Activated CD4-positive, alpha-beta memory T cell treated with anti-CD3 and anti-CD28 coated beads for 36 hours (primary cell): ENCODE measurements at regions of chr9 and their contacts with region 1.

Region 1: DNA sequence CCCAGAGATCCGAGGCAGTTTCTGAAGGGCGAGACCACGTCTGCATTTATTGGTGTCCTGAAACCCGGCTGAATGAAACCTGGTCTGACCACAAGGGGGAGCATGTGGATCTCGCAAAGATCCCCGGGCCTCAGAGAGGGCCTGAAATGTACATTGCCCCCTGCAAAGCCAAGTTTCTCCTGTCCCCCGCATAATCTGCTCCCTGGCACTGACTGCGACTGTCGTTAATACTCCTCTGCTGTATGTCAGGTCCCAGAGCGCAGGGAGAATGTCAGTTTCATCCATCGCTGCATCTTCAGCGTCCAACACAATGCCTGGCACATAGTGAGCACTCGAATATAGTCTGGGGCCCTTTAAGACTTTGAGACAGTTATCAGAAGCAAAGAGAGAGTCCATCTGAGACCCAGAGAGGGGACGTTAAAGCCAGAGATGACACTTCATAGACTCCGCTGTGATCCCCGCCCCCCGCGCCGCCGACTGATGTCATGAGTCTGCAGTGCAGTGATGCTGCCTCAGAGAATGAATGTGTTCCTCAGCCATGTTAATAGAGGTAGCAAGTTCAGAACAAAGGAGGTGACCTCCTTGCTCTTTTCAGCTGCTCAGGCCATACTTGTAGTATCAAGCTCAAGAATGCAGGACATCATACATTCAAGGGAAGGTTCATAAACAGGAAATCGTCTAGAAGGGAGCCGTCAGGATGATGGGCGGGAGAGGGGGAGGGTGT is 74.5 kb upstream of the BARHL1 start:
- DNase-seq: peak; percentile 74
- H3K4me3 Mint-ChIP-seq: no peak overlapping the region
- H3K27ac Mint-ChIP-seq: no peak overlapping the region
- H3K4me1 Mint-ChIP-seq: peaks cover 14% of the 10 kb centered on the region
- H3K27me3 Mint-ChIP-seq: peaks cover 3% of the 10 kb centered on the region

Region 2: DNA sequence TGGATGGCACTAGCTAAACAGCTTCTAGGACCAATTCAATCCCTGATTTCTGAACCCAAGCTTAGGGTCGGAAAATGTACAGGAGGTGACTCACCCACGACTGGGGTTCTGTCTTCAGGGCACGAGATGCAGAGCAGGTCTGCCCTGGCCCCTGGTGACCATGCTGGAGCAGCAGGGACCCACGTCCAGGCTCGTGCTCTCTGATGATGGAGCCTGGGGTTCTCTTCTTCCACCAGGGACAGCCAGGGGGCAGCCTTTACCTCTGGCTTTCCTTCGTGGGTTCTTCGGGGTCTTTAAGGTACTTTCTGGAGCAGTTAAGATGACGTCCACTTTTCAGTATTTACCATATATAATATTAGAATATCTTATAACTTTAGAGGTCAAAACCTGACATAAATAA is 95.8 kb before region 1 on chr9:
- CTCF ChIA-PET with region 1: interaction called, 11 read pairs
- POLR2A ChIA-PET with region 1: no interaction called
- intact Hi-C with region 1: loop called (anchors 1 kb)
- DNase-seq: peak; percentile 48
- H3K4me3 Mint-ChIP-seq: no peak overlapping the region
- H3K27ac Mint-ChIP-seq: no peak overlapping the region
- H3K4me1 Mint-ChIP-seq: peaks cover 26% of the 10 kb centered on the region
- H3K27me3 Mint-ChIP-seq: peaks cover 48% of the 10 kb centered on the region

Region 3: GRCh38 chr9:132575005-132575609 is 67.2 kb after region 1 on chr9:
- CTCF ChIA-PET with region 1: interaction called, 4 read pairs
- POLR2A ChIA-PET with region 1: no interaction called
- intact Hi-C with region 1: loop called (anchors 5 kb)
- DNase-seq: peak; percentile 67
- H3K4me3 Mint-ChIP-seq: no peak overlapping the region
- H3K27ac Mint-ChIP-seq: no peak overlapping the region
- H3K4me1 Mint-ChIP-seq: no peaks in the 10 kb centered on the region
- H3K27me3 Mint-ChIP-seq: peaks cover 46% of the 10 kb centered on the region

Region 4: DNA sequence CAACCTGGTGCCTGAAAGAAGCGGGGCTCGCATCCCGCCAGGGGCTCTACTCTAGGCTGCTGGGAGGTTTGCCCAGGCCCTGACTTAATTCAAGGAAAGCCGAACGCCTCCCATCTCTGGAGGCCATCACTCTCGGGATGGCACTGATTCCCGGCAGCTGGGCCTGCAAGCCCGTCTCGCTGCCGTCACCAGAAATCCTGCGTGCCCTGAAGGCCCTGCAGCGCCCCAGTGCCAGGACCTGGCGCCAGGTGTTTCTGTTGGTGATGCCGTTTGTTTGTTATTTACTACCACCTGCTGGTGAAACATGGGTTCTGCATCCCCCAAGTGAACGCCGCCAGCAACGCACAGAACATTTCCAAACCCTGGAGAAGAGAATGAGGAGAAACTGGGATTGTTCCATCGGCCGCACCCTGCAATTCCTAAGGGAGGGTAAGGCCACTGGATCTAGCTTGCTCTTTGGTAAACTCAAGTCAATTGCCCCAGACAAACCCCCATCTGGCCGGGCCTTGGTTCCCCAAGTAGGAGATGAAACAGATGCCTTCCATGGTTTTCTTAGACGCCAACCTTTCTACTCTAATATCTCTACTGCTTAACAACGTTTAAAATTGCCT is 292.2 kb after region 1 on chr9:
- CTCF ChIA-PET with region 1: no interaction called
- POLR2A ChIA-PET with region 1: no interaction called
- intact Hi-C with region 1: loop called (anchors 1 kb)
- DNase-seq: peak; percentile 74
- H3K4me3 Mint-ChIP-seq: no peak overlapping the region
- H3K27ac Mint-ChIP-seq: no peak overlapping the region
- H3K4me1 Mint-ChIP-seq: peaks cover 5% of the 10 kb centered on the region
- H3K27me3 Mint-ChIP-seq: peaks cover 28% of the 10 kb centered on the region